ENCODE measurements at regions of chr16 and their contacts with region 1.

Region 1: DNA sequence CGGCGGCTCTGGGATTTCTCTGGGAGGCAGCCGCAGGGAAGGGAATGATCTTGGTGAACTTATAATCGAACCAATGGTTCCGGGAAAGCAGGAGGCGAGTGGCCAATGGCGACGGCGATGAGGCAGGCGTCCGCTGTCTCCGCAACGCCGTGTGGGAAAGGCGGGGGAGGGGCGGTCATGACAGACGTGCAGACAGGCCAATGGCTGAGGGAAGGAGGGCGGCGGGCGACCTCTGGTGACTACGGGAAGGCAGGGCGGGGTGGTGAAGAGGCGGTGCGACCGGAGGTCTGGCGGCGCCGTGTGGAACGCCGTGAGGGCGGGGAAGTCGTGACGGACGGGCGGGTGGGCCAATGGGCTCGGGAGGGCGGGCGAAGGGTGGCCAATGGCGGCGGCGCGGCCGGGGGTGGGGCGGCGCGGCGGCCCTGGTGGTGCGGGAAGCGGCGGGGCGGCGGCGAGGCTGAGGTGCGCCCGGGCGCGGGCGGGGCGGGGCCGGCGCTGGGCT is at the start of gene RAB40C:
- DNase-seq: peak; percentile 98 to 100 (median 99)
- ATAC-seq: peak; percentile 80
- H3K4me3 ChIP-seq: peak within 1 kb of the TSS; percentile 80
- H3K4me3 Mint-ChIP-seq: peak within 1 kb of the TSS; percentile 98
- H3K27ac ChIP-seq: peak within 1 kb of the TSS; percentile 84 to 88
- H3K27ac Mint-ChIP-seq: peak within 1 kb of the TSS; percentile 95
- H3K4me1 ChIP-seq: peaks cover 42% of the 10 kb centered on the region
- H3K4me1 Mint-ChIP-seq: peaks cover 16% of the 10 kb centered on the region
- H3K27me3 ChIP-seq: no peaks in the 10 kb centered on the region
- H3K27me3 Mint-ChIP-seq: no peaks in the 10 kb centered on the region
- CTCF ChIP-seq: no peak
- total RNA-seq, gene RAB40C: 8.9 to 9.5 TPM

Region 2: GRCh38 chr16:569445-570254 is 20.1 kb before region 1 on chr16 and contains the start of gene PIGQ:
- CTCF ChIA-PET with region 1: no interaction called
- POLR2A ChIA-PET with region 1: interaction called, 4 read pairs
- intact Hi-C with region 1: loop called (anchors 1 kb)
- DNase-seq: peak; percentile 37 to 84 (median 58)
- ATAC-seq: peak; percentile 77
- H3K4me3 ChIP-seq: peak within 1 kb of the TSS; percentile 65
- H3K4me3 Mint-ChIP-seq: peak within 1 kb of the TSS; percentile 92
- H3K27ac ChIP-seq: peak within 1 kb of the TSS; percentile 64 to 70
- H3K27ac Mint-ChIP-seq: peak within 1 kb of the TSS; percentile 85
- H3K4me1 ChIP-seq: peaks cover 55% of the 10 kb centered on the region
- H3K4me1 Mint-ChIP-seq: peaks cover 33% of the 10 kb centered on the region
- H3K27me3 ChIP-seq: no peaks in the 10 kb centered on the region
- H3K27me3 Mint-ChIP-seq: no peaks in the 10 kb centered on the region
- CTCF ChIP-seq: no peak
- total RNA-seq, gene PIGQ: 22.8 to 27.0 TPM

Region 3: DNA sequence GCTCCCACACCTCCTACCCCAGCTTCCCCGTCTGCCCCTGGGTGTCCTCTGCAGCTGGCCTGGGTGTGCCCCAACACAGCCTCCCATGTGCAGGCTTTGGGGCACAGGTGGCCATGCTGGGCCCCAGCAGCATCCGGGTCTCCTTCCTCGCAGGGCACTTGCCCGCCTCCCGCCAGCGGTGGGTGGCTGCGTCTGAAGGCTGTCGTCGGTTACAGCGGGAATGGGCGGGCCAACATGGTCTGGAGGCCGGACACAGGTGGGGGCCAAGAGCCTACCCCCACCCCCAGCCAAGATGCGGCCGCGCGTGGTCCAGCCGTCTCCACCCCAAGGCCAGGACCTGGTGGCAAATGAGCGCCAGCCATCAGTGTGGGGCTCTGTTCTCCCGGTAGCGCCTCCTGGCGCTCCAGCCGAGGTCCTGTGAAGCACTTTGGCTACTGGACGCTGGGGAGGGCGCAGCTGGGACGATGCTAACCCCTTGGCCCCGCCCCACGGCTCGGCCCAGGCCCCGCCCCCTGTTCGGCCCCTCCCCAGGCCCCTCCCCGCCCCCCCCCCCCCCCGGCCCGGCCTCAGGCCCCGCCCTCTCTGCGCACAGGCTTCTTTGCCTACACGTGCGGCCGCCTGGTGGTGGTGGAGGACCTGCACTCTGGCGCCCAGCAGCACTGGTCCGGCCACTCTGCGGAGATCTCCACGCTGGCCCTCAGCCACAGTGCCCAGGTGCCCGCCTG is 70.9 kb after region 1 on chr16:
- CTCF ChIA-PET with region 1: no interaction called
- POLR2A ChIA-PET with region 1: interaction called, 3 read pairs
- intact Hi-C with region 1: loop called in 1 of 2 experiments (anchors 5 kb)
- DNase-seq: peak; percentile 33 to 86 (median 64)
- ATAC-seq: peak; percentile 81
- H3K4me3 ChIP-seq: no peak overlapping the region
- H3K4me3 Mint-ChIP-seq: peak overlapping the region; percentile 56
- H3K27ac ChIP-seq: no peak overlapping the region
- H3K27ac Mint-ChIP-seq: no peak overlapping the region
- H3K4me1 ChIP-seq: peaks cover 16% of the 10 kb centered on the region
- H3K4me1 Mint-ChIP-seq: peaks cover 6% of the 10 kb centered on the region
- H3K27me3 ChIP-seq: no peaks in the 10 kb centered on the region
- H3K27me3 Mint-ChIP-seq: no peaks in the 10 kb centered on the region
- CTCF ChIP-seq: no peak

Measured in CD4-positive, alpha-beta T cell (primary cell).